Aorta (tissue), 5 donors: ENCODE measurements at regions of chr15 and their contacts with region 1.

Region 1: GRCh38 chr15:40252438-40253166 is 13.7 kb downstream of the PAK6 start:
- DNase-seq: peak; percentile 59 to 85
- ATAC-seq: peak; percentile 56
- H3K4me3 ChIP-seq: peak overlapping the region; percentile 3 to 48
- H3K27ac ChIP-seq: no peak overlapping the region
- H3K4me1 ChIP-seq: no peaks in the 10 kb centered on the region
- H3K27me3 ChIP-seq: no peaks in the 10 kb centered on the region

Region 2: GRCh38 chr15:40310001-40310959 is 57.7 kb after region 1 on chr15:
- intact Hi-C with region 1: loop called in 1 of 2 experiments (anchors 10 kb)
- DNase-seq: peak; percentile 68 to 78
- ATAC-seq: peak; percentile 57
- H3K4me3 ChIP-seq: no peak overlapping the region
- H3K27ac ChIP-seq: no peak overlapping the region
- H3K4me1 ChIP-seq: no peaks in the 10 kb centered on the region
- H3K27me3 ChIP-seq: no peaks in the 10 kb centered on the region